ENCODE measurements at regions of chr19 and their contacts with region 1.

Region 1: GRCh38 chr19:13093407-13094105 is 9.1 kb downstream of the LYL1 start:
- DNase-seq: no peak
- H3K4me3 ChIP-seq: no peak overlapping the region
- H3K27me3 ChIP-seq: no peaks in the 10 kb centered on the region
- CTCF ChIP-seq: peak; percentile 90

Region 2: DNA sequence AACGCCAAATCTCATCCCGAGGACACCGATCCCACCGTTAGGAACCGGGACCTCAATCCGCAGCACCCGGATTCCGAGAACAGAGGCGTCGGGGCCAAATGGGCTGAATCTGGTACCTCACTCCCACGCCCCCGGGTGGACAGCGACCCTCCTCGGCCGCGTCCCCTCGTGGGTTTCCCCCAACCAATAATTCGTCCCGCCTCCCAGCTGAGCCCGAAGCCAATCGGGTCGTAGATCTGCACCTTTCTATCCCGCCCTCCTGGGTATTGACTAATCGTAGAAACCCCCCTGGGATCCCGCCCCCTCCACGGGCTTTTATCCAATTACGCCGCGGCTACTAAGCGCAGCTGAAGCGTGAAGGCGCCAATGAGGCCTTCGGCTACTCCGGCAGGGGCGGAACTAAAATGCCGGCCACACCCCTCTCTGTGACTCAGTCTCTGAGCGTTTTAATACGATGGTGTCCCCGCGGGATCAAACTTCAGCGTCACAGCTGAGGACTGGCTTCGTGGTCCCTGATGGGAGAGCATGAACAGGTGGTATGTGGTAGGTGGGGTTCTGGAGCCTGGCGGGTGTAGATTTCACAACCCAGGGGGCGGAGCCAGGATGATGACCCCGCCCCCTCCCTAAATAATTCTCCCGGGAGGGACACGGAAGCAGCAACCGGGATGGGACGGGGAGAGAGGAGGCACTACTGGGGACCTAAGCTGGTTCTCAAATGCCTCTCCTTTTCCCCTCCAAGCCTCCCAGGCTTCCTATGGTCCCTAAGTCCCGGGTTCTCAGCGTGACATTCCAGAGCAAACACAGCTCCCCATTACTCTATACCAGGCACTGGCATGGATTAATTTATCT is 1747.2 kb before region 1 on chr19 and contains the starts of genes CCDC159 and TMEM205:
- CTCF ChIA-PET with region 1: no interaction called
- POLR2A ChIA-PET with region 1: interaction called, 12 read pairs
- DNase-seq: peak; percentile 96
- H3K4me3 ChIP-seq: peak within 1 kb of the TSS; percentile 69
- H3K27me3 ChIP-seq: no peaks in the 10 kb centered on the region
- CTCF ChIP-seq: no peak; the same call in 1 of the 2 replicates
- polyA plus RNA-seq, gene CCDC159: 16.3 and 21.4 TPM in 2 replicates
- polyA plus RNA-seq, gene TMEM205: 89.8 and 107 TPM in 2 replicates

Region 3: DNA sequence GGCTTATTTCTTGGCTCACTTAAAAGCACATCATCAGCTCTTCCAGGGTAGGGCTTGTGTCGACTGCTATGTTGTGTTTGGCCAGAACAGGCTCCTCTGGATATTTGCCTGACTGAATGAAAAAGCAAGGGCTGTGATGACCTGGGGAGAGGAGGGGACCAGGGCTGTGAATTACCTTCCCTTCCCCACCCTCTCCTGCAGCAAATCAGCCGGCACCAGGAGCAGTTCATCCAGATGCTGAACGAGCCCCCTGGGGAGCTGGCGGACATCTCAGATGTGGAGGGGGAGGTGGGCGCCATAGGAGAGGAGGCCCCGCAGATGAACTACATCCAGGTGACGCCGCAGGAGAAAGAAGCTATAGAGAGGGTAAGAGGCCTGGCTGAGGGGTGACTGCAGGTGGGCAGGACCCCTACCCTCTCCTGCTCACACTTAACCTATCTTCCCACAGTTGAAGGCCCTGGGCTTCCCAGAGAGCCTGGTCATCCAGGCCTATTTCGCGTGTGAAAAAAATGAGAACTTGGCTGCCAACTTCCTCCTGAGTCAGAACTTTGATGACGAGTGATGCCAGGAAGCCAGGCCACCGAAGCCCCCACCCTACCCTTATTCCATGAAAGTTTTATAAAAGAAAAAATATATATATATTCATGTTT is 140.9 kb before region 1 on chr19:
- CTCF ChIA-PET with region 1: no interaction called
- POLR2A ChIA-PET with region 1: no interaction called
- DNase-seq: no peak
- H3K4me3 ChIP-seq: no peak overlapping the region
- H3K27me3 ChIP-seq: no peaks in the 10 kb centered on the region
- CTCF ChIP-seq: no peak

Region 4: DNA sequence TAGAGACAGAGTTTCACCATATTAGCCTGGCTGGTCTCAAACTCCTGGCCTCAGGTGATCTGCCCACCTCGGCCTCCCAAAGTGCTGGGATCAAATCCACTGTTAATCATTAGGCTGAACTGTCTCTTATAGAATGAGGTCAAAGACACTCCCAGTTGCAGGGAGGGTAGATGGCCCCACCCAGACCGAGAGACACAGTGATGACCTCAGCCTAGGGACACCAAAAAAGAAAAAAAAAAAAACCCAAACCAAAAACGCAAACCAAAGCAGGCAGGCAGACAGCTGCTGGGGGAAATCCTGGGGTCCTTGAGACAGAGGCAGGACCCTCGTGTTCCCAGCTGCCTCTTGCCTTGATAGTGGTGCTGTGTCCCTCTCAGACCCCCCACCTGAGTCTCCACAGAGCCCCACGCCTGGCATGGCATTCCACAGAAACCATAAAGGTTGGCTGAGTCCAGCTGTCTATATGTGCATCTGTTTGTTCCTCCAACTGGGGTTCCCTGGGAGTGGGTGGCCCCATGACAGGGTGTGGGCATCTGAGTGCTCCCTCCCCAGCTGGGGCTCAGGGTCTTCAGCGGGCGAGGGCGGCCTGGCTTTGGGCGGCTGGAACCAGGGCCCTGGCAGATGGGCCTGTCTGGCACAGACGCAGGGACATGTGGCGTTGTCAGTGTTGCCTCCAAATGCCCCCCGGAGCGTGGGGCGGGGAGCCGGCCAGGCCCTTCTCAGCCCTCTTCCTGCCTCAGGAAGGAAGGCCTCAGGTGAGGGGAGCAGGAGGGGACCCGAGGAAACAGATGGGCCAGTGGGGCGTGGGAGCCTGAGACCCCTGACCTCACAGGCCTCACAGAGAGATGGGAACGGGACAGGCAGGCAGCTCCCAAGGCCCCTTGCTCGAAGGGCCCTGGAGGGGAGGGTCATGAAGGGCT is 119.0 kb before region 1 on chr19:
- CTCF ChIA-PET with region 1: interaction called, 139 read pairs
- POLR2A ChIA-PET with region 1: no interaction called
- DNase-seq: no peak
- H3K4me3 ChIP-seq: no peak overlapping the region
- H3K27me3 ChIP-seq: no peaks in the 10 kb centered on the region
- CTCF ChIP-seq: no peak

Region 5: DNA sequence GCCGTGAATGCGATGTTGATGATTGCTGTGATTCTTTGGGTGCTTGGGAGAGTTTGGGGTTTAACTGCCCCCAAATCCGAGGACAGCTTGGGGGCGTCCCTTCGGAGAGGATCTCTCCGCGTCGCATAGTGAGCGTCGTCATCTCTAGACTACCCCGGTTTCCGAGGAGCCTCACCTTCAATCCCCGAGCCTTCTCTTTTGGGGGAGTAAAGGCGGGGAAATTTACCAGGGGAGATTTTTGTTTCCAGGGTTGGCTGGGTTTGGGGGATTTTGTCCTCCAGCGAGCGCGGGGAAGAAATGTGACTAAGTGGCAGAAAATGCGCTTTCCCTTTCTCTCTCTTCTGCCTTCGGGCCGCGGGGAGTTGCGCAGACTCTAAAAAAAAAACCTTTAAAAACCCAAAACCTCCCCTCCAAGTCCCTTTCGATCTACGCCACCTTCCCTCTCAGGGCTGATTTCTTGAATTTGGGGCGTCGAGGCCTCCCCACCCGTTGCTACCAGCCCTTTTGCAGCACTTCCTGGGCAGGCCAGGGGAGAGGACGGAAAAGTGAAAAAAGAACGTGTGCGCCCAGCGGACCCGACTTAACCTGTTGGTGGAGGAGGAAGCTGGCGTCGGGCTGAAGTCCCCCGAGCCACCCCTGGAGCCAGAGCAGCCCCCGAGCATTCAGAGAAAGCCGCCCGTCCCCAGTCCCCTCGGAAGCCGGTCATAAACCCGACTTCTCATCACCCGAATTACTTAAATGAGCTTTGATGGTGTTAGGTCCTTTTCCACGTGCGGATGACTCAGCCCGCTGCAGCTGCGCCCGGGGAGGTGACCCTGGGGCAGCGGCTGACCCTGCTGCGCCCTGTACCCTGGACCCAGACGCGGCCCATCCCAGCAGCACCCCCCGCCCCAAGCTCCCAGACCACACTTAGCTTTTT is 80.6 kb before region 1 on chr19:
- CTCF ChIA-PET with region 1: interaction called, 10 read pairs
- POLR2A ChIA-PET with region 1: no interaction called
- DNase-seq: no peak
- H3K4me3 ChIP-seq: peak overlapping the region; percentile 38
- H3K27me3 ChIP-seq: no peaks in the 10 kb centered on the region
- CTCF ChIP-seq: no peak

Region 6: DNA sequence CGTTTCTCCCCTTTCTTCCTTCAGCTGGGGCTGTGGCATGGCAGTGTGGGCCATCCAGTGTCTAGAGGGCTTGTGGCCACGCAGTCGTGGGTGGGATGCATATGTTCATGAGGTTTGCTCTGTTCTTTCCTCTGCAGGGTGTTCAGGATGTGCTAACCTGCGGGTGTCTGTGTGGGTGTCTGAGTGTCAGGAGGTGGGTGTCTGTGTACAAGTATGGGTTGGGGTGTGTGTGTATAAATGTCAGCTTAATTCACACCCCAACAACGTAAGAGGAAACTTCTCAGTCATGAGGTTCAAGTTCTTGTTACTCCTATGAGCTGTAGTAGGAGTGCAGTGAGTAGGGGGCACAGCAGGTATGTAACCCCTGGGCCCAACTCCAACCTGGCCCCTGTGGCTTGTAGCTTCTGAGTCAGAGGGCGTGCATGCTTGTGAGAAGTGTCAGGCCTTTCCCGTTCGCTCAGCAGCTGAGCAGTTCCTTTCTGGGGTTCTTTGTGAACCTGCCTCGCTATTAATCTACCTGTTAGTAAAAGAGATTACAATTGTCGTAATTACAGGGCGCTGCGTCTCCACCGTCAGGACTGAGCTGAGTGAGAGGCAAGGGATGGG is 49.2 kb before region 1 on chr19:
- CTCF ChIA-PET with region 1: interaction called, 10 read pairs
- POLR2A ChIA-PET with region 1: no interaction called
- DNase-seq: no peak
- H3K4me3 ChIP-seq: no peak overlapping the region
- H3K27me3 ChIP-seq: no peaks in the 10 kb centered on the region
- CTCF ChIP-seq: no peak

Region 7: GRCh38 chr19:13060964-13061927 is 32.3 kb before region 1 on chr19:
- CTCF ChIA-PET with region 1: interaction called, 91 read pairs
- POLR2A ChIA-PET with region 1: no interaction called
- DNase-seq: no peak
- H3K4me3 ChIP-seq: no peak overlapping the region
- H3K27me3 ChIP-seq: no peaks in the 10 kb centered on the region
- CTCF ChIP-seq: peak; percentile 98

Region 8: DNA sequence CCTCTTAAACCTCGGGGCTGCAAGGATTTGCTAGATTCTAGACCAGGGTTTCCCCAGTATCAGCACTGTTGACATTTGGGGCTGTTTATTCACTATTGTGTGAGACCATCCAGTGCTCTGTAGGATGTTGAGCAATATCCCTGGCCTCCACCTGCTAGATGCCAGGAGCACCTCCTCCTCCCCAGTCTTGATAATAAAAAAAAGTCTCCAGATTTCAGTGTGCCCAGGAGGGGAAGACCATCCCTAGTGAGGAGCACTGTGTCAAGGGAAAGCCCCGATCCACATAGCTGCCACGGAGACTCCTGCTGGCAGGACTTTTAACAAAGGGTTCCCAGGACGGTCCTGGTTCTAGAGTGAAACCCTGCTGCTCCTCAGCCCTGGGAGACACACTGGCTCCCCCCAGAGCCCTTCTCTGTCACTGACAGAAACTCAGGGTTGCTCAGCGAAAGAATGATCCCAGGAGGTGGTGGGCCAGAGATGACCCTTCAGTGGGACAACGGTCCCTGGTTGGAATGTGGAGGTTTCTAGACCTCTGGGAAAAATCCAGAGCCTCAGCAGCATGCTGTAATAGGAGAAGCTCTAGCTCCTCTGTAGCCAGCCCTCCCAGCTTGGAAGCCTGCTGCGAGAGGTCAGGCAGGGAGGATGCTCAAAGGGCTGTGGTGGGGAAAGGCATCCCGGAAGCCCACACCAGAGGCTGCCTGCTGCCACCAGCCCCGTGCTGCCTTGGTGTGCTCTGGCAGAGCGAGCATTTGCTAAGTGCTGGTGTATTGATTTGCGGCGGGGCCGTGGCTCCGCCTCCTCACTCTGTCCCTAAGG is 11.2 kb before region 1 on chr19:
- CTCF ChIA-PET with region 1: interaction called, 13 read pairs
- POLR2A ChIA-PET with region 1: no interaction called
- DNase-seq: no peak
- H3K4me3 ChIP-seq: no peak overlapping the region
- H3K27me3 ChIP-seq: no peaks in the 10 kb centered on the region
- CTCF ChIP-seq: peak; percentile 56